Heart right ventricle (tissue), 16 donors: ENCODE measurements at regions of chr1 and their contacts with region 1.

Region 1: DNA sequence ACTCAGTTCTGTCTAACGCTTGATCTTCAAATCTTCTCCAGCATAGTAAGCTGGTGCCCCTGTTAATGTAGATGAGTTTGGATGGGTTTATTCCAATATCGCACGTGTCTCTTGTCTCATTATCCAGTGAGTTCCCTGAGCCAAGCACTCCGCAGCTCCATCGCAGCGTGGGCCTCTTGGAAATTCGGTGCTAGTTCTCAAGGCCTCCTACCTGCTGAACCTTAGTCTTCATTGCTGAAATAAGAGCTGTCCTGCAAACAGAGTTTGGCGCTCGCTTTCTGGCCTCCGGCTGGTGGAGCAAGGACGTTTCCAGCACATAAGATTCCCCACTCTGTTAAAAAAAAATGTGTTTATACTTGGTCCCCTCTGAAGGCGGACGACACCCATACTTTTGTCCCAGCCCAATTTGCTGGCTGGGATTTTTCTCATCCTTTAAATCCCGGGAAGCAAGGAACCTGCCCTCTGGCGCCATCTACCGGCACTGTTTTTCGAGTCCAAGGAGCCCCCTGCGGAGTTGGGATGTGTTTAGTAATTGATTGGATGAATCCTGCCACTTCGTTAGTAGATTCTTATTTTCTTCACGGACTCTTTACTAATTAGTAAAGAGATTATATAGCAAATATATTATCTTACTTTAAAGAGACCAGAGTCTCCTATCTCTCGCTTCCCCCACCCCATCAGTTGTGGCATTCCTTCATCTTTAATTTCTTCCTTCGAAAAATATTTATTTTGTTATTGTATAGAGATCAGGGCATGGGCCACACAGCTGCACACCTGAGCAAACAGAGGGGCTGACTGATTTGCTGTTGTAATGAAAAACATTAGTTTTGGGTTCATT is 14.7 kb downstream of the JUN start:
- DNase-seq: peak; percentile 85 to 86
- ATAC-seq: peak in 3 of 8 donors; percentile 30 to 42 (median 37)
- H3K4me3 ChIP-seq: no peak overlapping the region
- H3K27ac ChIP-seq: no peak overlapping the region
- H3K4me1 ChIP-seq: peaks cover 8 to 30% (median 23%) of the 10 kb centered on the region in 9 donors
- H3K27me3 ChIP-seq: no peaks in the 10 kb centered on the region
- CTCF ChIP-seq: peak; percentile 68 to 91 (median 89)

Region 2: GRCh38 chr1:58739856-58740466 is 29.2 kb before region 1 on chr1:
- intact Hi-C with region 1: loop called in 5 of 10 experiments (anchors 1 to 5 kb)
- DNase-seq: peak in 1 of 2 donors; percentile 52
- ATAC-seq: peak in 6 of 8 donors; percentile 49 to 76 (median 64)
- H3K4me3 ChIP-seq: no peak overlapping the region
- H3K27ac ChIP-seq: no peak overlapping the region
- H3K4me1 ChIP-seq: peaks cover 0 to 24% (median 3%) of the 10 kb centered on the region in 9 donors
- H3K27me3 ChIP-seq: no peaks in the 10 kb centered on the region
- CTCF ChIP-seq: peak; percentile 73 to 95 (median 86)

Region 3: GRCh38 chr1:58870296-58870676 is 101.1 kb after region 1 on chr1:
- intact Hi-C with region 1: no loop called
- DNase-seq: no peak
- ATAC-seq: no peak
- H3K4me3 ChIP-seq: no peak overlapping the region
- H3K27ac ChIP-seq: no peak overlapping the region
- H3K4me1 ChIP-seq: peaks cover 11 to 22% (median 12%) of the 10 kb centered on the region in 9 donors
- H3K27me3 ChIP-seq: no peaks in the 10 kb centered on the region
- CTCF ChIP-seq: no peak